ENCODE measurements at regions of chr12 and their contacts with region 1.

Region 1: DNA sequence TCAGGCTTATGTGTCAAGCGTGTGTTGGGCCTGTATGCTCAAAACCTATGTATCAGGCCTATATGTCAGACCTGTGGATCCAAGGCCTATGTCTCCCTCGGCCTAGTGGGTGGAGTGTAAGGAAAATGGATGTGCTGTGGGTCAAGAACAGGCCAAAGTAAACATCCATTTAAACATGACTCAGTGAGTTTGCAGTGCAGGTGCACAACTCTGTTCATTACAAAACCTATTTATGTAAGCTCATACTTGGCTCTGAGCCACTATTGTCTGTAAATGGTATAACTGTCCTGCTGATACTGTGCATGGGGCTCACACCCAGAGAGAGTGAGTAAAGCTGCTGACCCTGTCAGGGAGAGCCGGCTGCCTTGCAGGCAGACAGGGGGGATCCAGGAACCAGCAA is 249.7 kb upstream of the AVPR1A start:
- DNase-seq: peak; percentile 61
- H3K4me3 Mint-ChIP-seq: no peak overlapping the region
- H3K27ac Mint-ChIP-seq: peak overlapping the region; percentile 61
- H3K4me1 Mint-ChIP-seq: peaks cover 17% of the 10 kb centered on the region
- H3K27me3 Mint-ChIP-seq: no peaks in the 10 kb centered on the region
- CTCF ChIP-seq: no peak

Region 2: GRCh38 chr12:63362791-63363190 is 37.9 kb before region 1 on chr12:
- CTCF ChIA-PET with region 1: no interaction called
- intact Hi-C with region 1: loop called (anchors 5 kb)
- DNase-seq: no peak
- H3K4me3 Mint-ChIP-seq: no peak overlapping the region
- H3K27ac Mint-ChIP-seq: no peak overlapping the region
- H3K4me1 Mint-ChIP-seq: peaks cover 56% of the 10 kb centered on the region
- H3K27me3 Mint-ChIP-seq: no peaks in the 10 kb centered on the region
- CTCF ChIP-seq: no peak

Region 3: GRCh38 chr12:63525831-63526230 is 125.1 kb after region 1 on chr12:
- CTCF ChIA-PET with region 1: no interaction called
- intact Hi-C with region 1: no loop called
- DNase-seq: no peak
- H3K4me3 Mint-ChIP-seq: no peak overlapping the region
- H3K27ac Mint-ChIP-seq: no peak overlapping the region
- H3K4me1 Mint-ChIP-seq: no peaks in the 10 kb centered on the region
- H3K27me3 Mint-ChIP-seq: no peaks in the 10 kb centered on the region
- CTCF ChIP-seq: no peak